ENCODE measurements at regions of chr17 and their contacts with region 1.

Region 1: DNA sequence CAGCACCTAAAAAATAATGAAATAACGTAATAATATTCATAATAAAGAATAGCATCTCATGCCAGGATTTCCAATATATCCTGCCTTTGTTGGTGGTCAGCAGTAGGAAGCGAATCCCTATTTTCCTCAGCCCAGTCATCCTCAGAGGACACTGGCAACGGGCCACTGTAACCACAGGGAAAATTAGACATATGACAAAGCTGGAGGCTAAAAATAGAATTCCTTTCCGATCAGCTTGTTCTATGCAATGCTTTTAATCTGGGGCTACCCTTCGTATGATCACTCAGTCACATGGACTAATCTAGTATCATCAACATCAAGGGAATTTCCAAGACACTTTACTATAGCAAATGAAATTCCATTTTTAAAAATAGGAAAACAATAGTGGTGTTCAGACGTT is 246.9 kb upstream of the KCNJ16 start:
- DNase-seq: no peak
- ATAC-seq: no peak
- H3K4me3 Mint-ChIP-seq: no peak overlapping the region
- H3K27ac Mint-ChIP-seq: no peak overlapping the region
- H3K4me1 Mint-ChIP-seq: no peaks in the 10 kb centered on the region
- H3K27me3 Mint-ChIP-seq: peaks cover 2% of the 10 kb centered on the region

Region 2: GRCh38 chr17:69702074-69702473 is 126.0 kb before region 1 on chr17:
- CTCF ChIA-PET with region 1: no interaction called
- POLR2A ChIA-PET with region 1: no interaction called
- intact Hi-C with region 1: no loop called
- DNase-seq: no peak
- ATAC-seq: no peak
- H3K4me3 Mint-ChIP-seq: no peak overlapping the region
- H3K27ac Mint-ChIP-seq: no peak overlapping the region
- H3K4me1 Mint-ChIP-seq: no peaks in the 10 kb centered on the region
- H3K27me3 Mint-ChIP-seq: no peaks in the 10 kb centered on the region

Region 3: GRCh38 chr17:69812240-69812837 is 15.7 kb before region 1 on chr17:
- CTCF ChIA-PET with region 1: no interaction called
- POLR2A ChIA-PET with region 1: no interaction called
- intact Hi-C with region 1: no loop called
- DNase-seq: no peak
- ATAC-seq: no peak
- H3K4me3 Mint-ChIP-seq: no peak overlapping the region
- H3K27ac Mint-ChIP-seq: no peak overlapping the region
- H3K4me1 Mint-ChIP-seq: no peaks in the 10 kb centered on the region
- H3K27me3 Mint-ChIP-seq: no peaks in the 10 kb centered on the region

Region 4: GRCh38 chr17:70006159-70006558 is 178.1 kb after region 1 on chr17:
- CTCF ChIA-PET with region 1: no interaction called
- POLR2A ChIA-PET with region 1: no interaction called
- intact Hi-C with region 1: loop called in 1 of 2 experiments (anchors 10 kb)
- DNase-seq: no peak
- ATAC-seq: no peak
- H3K4me3 Mint-ChIP-seq: no peak overlapping the region
- H3K27ac Mint-ChIP-seq: no peak overlapping the region
- H3K4me1 Mint-ChIP-seq: no peaks in the 10 kb centered on the region
- H3K27me3 Mint-ChIP-seq: no peaks in the 10 kb centered on the region

Measured in activated CD4-positive, alpha-beta T cell treated with anti-CD3 and anti-CD28 coated beads for 36 hours (primary cell).